Motor neuron (in vitro differentiated cells): ENCODE measurements at regions of chr9 and their contacts with region 1.

Region 1: DNA sequence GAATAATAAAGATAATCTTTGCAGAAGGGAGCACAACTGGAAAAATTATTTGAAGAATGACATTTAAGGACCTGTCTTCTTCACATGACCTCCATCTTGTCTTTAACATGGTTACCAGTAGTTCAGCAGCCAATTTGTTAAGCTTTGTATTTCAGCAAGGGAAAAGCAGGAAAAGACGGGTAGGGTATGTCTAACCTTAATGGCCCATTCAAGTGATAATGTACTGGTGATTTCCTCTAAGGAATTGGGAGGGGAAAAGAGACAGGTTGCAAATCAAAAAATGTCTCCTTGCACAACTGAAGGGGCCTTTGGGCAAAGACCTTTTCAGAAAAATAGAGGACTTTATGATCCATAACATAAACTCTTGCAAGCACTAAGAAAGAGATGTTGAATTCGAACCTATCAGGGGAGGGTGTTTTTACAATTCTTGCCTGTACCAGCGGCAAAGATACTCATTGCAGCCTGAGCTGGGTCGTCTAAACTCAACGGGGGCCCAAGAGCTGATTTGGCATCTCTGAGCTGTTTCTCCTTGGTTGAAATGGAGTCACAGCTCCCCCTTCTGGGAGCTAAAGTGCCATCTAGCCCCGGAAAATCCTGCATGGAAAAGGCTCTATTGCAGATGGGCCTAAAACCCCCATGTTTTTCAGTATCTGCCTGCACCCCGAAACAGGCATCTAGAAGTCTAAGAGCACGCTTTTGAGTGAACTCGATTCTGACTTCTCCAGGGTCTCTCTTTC is 3.8 kb downstream of the BRINP1 start:
- ATAC-seq: peak in 3 of 8 experiments; percentile 6 to 43 (median 6)
- H3K4me3 ChIP-seq: peak overlapping the region in 1 of 5 donors; percentile 10
- H3K27ac ChIP-seq: no peak overlapping the region
- H3K4me1 ChIP-seq: peaks cover 8 to 9% of the 10 kb centered on the region in 2 donors

Region 2: DNA sequence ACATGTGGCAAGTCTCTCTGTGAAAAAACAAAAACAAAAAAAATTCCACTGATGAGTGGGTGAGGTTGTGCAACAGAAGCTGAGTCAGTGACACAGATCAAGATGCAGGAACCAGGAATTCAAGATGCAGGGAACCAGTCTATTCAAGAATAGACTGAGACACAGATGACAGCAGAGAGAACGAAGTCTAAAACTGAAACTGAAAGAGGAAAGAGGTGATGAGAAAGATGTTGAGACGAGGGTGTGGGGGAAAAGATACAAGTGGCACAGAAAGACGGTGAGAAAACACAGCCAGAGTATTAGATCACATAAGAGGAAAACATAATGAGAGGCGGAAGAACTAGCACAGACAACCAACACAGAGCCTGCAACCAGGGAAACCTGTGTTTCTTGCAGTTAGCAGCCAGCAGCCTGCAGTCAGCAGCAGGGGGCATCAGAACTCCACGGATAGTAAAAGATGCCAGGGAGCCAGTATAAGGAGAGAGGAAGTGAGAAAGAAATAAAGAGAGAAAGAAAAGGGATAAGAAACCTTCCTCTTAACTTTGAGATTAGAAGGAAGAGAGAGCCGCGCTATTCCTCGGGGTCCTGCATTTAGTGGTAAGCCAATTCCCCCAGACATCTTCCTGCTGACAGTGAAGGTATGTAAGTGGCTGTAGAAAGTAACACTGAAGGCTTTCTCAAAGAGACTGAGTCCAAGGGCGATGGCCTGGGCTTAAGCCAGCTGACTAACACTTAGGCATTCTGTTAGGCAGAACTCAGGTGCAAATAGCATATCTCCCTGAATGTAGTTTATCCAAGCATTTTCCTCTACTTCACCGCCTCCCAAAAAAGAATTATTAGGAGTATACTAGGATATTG is 1582.3 kb before region 1 on chr9:
- in situ Hi-C with region 1: loop called in 4 of 9 experiments (anchors 25 kb)
- ATAC-seq: peak; percentile 93 to 100 (median 99)
- H3K4me3 ChIP-seq: peak overlapping the region in 2 of 5 donors; percentile 15 to 21
- H3K27ac ChIP-seq: no peak overlapping the region
- H3K4me1 ChIP-seq: peaks cover 3 to 6% of the 10 kb centered on the region in 2 donors

Region 3: DNA sequence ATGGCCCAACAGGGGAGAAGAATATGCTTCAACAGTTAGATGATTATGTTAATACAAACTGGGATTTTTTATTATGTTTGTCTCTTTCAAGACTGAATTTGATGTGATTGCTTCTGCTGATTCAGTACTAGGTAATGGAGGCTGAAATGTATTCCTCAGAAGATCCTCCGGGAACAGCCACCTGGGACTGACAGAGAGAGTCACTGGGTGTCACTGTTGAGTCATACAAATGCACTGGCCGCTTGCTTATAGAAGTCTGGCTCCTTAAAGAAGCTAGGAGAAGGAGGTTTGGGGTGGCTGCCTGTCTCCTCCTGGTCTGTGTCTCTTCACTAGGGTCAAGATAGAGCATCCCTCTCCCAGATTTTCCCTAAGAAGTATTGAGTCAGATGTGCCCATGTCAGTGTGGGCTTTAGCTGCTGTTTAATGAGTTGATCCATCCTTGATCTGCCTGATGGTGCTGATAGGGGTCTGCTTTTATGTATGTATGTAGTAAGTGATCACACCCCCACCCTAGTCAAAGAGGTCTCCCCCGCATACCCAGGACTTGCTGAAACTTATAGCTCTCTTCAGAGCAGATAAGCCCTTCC is 769.6 kb before region 1 on chr9:
- in situ Hi-C with region 1: loop called in 2 of 9 experiments (anchors 25 kb)
- ATAC-seq: peak; percentile 80 to 100 (median 86)
- H3K4me3 ChIP-seq: no peak overlapping the region
- H3K27ac ChIP-seq: no peak overlapping the region
- H3K4me1 ChIP-seq: peaks cover 0 to 2% of the 10 kb centered on the region in 2 donors

Region 4: GRCh38 chr9:118829334-118829733 is 536.1 kb before region 1 on chr9:
- in situ Hi-C with region 1: loop called in 2 of 9 experiments (anchors 10 to 25 kb)
- ATAC-seq: peak in 2 of 8 experiments; percentile 42 to 59
- H3K4me3 ChIP-seq: no peak overlapping the region
- H3K27ac ChIP-seq: no peak overlapping the region
- H3K4me1 ChIP-seq: no peaks in the 10 kb centered on the region

Region 5: GRCh38 chr9:119968836-119969707 is 603.6 kb after region 1 on chr9:
- in situ Hi-C with region 1: loop called in 1 of 9 experiments (anchors 25 kb)
- ATAC-seq: peak; percentile 92 to 99 (median 95)
- H3K4me3 ChIP-seq: no peak overlapping the region
- H3K27ac ChIP-seq: no peak overlapping the region
- H3K4me1 ChIP-seq: peaks cover 0 to 3% of the 10 kb centered on the region in 2 donors